CD14-positive monocyte (primary cell): ENCODE measurements at regions of chr17 and their contacts with region 1.

Region 1: DNA sequence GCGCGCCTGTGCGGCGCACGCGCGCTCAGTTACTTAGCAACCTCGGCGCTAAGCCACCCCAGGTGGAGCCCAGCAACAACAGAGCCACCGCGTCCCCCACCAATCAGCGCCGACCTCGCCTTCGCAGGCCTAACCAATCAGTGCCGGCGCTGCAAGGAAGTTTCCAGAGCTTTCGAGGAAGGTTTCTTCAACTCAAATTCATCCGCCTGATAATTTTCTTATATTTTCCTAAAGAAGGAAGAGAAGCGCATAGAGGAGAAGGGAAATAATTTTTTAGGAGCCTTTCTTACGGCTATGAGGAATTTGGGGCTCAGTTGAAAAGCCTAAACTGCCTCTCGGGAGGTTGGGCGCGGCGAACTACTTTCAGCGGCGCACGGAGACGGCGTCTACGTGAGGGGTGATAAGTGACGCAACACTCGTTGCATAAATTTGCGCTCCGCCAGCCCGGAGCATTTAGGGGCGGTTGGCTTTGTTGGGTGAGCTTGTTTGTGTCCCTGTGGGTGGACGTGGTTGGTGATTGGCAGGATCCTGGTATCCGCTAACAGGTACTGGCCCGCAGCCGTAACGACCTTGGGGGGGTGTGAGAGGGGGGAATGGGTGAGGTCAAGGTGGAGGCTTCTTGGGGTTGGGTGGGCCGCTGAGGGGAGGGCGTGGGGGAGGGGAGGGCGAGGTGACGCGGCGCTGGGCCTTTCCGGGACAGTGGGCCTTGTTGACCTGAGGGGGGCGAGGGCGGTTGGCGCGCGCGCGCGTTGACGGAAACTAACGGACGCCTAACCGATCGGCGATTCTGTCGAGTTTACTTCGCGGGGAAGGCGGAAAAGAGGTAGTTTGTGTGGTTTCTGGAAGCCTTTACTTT is at the start of gene UBB:
- DNase-seq: peak; percentile 93 to 99 (median 95)
- H3K4me3 ChIP-seq: peak within 1 kb of the TSS; percentile 72 to 85 (median 74)
- H3K4me3 Mint-ChIP-seq: peak within 1 kb of the TSS; percentile 92 to 96
- H3K27ac ChIP-seq: peak within 1 kb of the TSS; percentile 80 to 92
- H3K27ac Mint-ChIP-seq: peak within 1 kb of the TSS; percentile 97 to 100 (median 99)
- H3K4me1 ChIP-seq: peaks cover 19 to 26% of the 10 kb centered on the region in 2 donors
- H3K4me1 Mint-ChIP-seq: peaks cover 25% of the 10 kb centered on the region
- H3K27me3 ChIP-seq: no peaks in the 10 kb centered on the region
- H3K27me3 Mint-ChIP-seq: peaks cover 0 to 4% (median 3%) of the 10 kb centered on the region in 3 donors
- CTCF ChIP-seq: no peak
- polyA plus RNA-seq, gene UBB: 1,176 to 1,365 (median 1,282) TPM

Region 2: GRCh38 chr17:16215273-16215964 is 165.4 kb before region 1 on chr17 and contains the start of gene NCOR1:
- intact Hi-C with region 1: loop called in 1 of 2 experiments (anchors 10 kb)
- DNase-seq: peak; percentile 84 to 87 (median 86)
- H3K4me3 ChIP-seq: peak within 1 kb of the TSS; percentile 64 to 89 (median 68)
- H3K4me3 Mint-ChIP-seq: peak within 1 kb of the TSS; percentile 94 to 97
- H3K27ac ChIP-seq: peak within 1 kb of the TSS; percentile 83 to 89
- H3K27ac Mint-ChIP-seq: peak within 1 kb of the TSS; percentile 85 to 97 (median 89)
- H3K4me1 ChIP-seq: peaks cover 31 to 46% of the 10 kb centered on the region in 2 donors
- H3K4me1 Mint-ChIP-seq: peaks cover 40% of the 10 kb centered on the region
- H3K27me3 ChIP-seq: no peaks in the 10 kb centered on the region
- H3K27me3 Mint-ChIP-seq: no peaks in the 10 kb centered on the region
- CTCF ChIP-seq: peak; percentile 28
- polyA plus RNA-seq, gene NCOR1: 23.2 to 47.0 (median 37.9) TPM

Region 3: GRCh38 chr17:16313139-16314090 is 67.5 kb before region 1 on chr17:
- intact Hi-C with region 1: no loop called
- DNase-seq: no peak
- H3K4me3 ChIP-seq: no peak overlapping the region
- H3K4me3 Mint-ChIP-seq: no peak overlapping the region
- H3K27ac ChIP-seq: no peak overlapping the region
- H3K27ac Mint-ChIP-seq: no peak overlapping the region
- H3K4me1 ChIP-seq: no peaks in the 10 kb centered on the region
- H3K4me1 Mint-ChIP-seq: no peaks in the 10 kb centered on the region
- H3K27me3 ChIP-seq: no peaks in the 10 kb centered on the region
- H3K27me3 Mint-ChIP-seq: peaks cover 0 to 2% (median 0%) of the 10 kb centered on the region in 3 donors
- CTCF ChIP-seq: no peak

Region 4: GRCh38 chr17:16415031-16415924 is 34.4 kb after region 1 on chr17 and contains the start of gene TRPV2:
- intact Hi-C with region 1: loop called in 1 of 2 experiments (anchors 2 kb)
- DNase-seq: peak in 2 of 3 donors; percentile 36 to 42
- H3K4me3 ChIP-seq: peak within 1 kb of the TSS; percentile 68 to 90 (median 78)
- H3K4me3 Mint-ChIP-seq: peak within 1 kb of the TSS; percentile 90 to 95
- H3K27ac ChIP-seq: peak within 1 kb of the TSS; percentile 95 to 97
- H3K27ac Mint-ChIP-seq: peak within 1 kb of the TSS; percentile 99 to 100 (median 99)
- H3K4me1 ChIP-seq: peaks cover 38 to 54% of the 10 kb centered on the region in 2 donors
- H3K4me1 Mint-ChIP-seq: peaks cover 44% of the 10 kb centered on the region
- H3K27me3 ChIP-seq: no peaks in the 10 kb centered on the region
- H3K27me3 Mint-ChIP-seq: peaks cover 0 to 1% (median 0%) of the 10 kb centered on the region in 3 donors
- CTCF ChIP-seq: peak; percentile 52
- polyA plus RNA-seq, gene TRPV2: 51.4 to 66.3 (median 58.2) TPM

Region 5: GRCh38 chr17:16438557-16439302 is 57.9 kb after region 1 on chr17:
- intact Hi-C with region 1: loop called in 1 of 2 experiments (anchors 2 kb)
- DNase-seq: peak; percentile 95 to 98 (median 95)
- H3K4me3 ChIP-seq: peak overlapping the region; percentile 54 to 85 (median 75)
- H3K4me3 Mint-ChIP-seq: peak overlapping the region; percentile 95 to 96
- H3K27ac ChIP-seq: peak overlapping the region; percentile 81 to 90
- H3K27ac Mint-ChIP-seq: peak overlapping the region; percentile 92 to 98 (median 96)
- H3K4me1 ChIP-seq: peaks cover 40 to 48% of the 10 kb centered on the region in 2 donors
- H3K4me1 Mint-ChIP-seq: peaks cover 49% of the 10 kb centered on the region
- H3K27me3 ChIP-seq: no peaks in the 10 kb centered on the region
- H3K27me3 Mint-ChIP-seq: no peaks in the 10 kb centered on the region
- CTCF ChIP-seq: no peak

Region 6: GRCh38 chr17:16449121-16449570 is 68.3 kb after region 1 on chr17:
- intact Hi-C with region 1: no loop called
- DNase-seq: no peak
- H3K4me3 ChIP-seq: no peak overlapping the region
- H3K4me3 Mint-ChIP-seq: no peak overlapping the region
- H3K27ac ChIP-seq: no peak overlapping the region
- H3K27ac Mint-ChIP-seq: no peak overlapping the region
- H3K4me1 ChIP-seq: no peaks in the 10 kb centered on the region
- H3K4me1 Mint-ChIP-seq: peaks cover 8% of the 10 kb centered on the region
- H3K27me3 ChIP-seq: no peaks in the 10 kb centered on the region
- H3K27me3 Mint-ChIP-seq: peaks cover 0 to 1% (median 0%) of the 10 kb centered on the region in 3 donors
- CTCF ChIP-seq: no peak

Region 7: DNA sequence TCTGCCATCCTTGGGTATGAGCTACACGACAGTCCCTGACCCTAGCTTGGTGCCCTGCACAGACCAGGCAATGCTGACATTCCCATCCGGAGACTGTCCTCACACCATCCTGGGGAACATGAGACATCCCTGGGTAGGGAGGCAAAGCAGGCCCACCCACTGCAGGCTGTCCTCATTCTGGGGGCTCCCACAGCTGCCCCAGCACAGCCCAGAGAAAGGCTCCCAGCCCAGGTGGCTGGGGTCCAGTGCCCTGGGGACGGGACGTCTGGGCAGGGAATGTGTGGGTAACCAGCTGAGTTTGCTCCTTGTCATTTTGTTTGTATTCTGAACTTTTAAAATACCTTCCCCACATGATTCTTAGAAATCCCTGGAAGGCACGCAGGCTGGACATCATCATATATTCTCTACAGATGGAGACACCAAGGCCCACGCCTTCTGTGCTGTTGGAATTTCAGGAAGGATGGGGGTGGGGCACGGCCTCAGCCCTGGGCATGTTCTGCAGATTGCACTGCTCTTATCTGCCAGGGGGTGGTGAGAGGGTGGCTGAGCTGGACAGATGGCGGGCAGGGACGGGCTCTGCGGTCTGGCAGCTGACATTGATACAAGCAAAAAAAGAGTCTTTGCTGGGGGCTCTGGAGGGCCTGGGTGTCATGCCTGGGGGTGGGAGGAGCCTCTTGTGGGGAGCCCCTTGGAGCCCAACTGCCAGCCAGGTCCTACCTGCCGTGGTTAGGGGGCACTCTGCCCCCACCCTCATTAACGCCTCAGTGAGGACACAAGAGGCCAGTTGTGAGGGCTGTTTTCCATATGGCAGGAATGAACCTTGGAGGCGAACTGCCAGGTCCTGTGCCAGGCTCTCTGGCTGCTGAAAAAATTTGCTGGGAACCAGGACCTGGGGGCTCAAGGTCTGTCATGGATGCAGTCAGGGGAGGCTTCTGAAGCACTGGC is 82.8 kb after region 1 on chr17:
- intact Hi-C with region 1: no loop called
- DNase-seq: no peak
- H3K4me3 ChIP-seq: no peak overlapping the region
- H3K4me3 Mint-ChIP-seq: no peak overlapping the region
- H3K27ac ChIP-seq: no peak overlapping the region
- H3K27ac Mint-ChIP-seq: no peak overlapping the region
- H3K4me1 ChIP-seq: no peaks in the 10 kb centered on the region
- H3K4me1 Mint-ChIP-seq: peaks cover 2% of the 10 kb centered on the region
- H3K27me3 ChIP-seq: no peaks in the 10 kb centered on the region
- H3K27me3 Mint-ChIP-seq: peaks cover 0 to 3% (median 0%) of the 10 kb centered on the region in 3 donors
- CTCF ChIP-seq: no peak

Region 8: GRCh38 chr17:16521070-16521727 is 140.3 kb after region 1 on chr17:
- intact Hi-C with region 1: loop called (anchors 5 to 10 kb)
- DNase-seq: peak; percentile 82 to 89 (median 86)
- H3K4me3 ChIP-seq: no peak overlapping the region
- H3K4me3 Mint-ChIP-seq: no peak overlapping the region
- H3K27ac ChIP-seq: peak overlapping the region in 1 of 2 donors; percentile 66
- H3K27ac Mint-ChIP-seq: peak overlapping the region; percentile 42 to 93 (median 86)
- H3K4me1 ChIP-seq: peaks cover 11 to 19% of the 10 kb centered on the region in 2 donors
- H3K4me1 Mint-ChIP-seq: peaks cover 18% of the 10 kb centered on the region
- H3K27me3 ChIP-seq: no peaks in the 10 kb centered on the region
- H3K27me3 Mint-ChIP-seq: peaks cover 5 to 11% (median 9%) of the 10 kb centered on the region in 3 donors
- CTCF ChIP-seq: peak; percentile 90